SK-N-SH (cell line): ENCODE measurements at regions of chr1 and their contacts with region 1.

Region 1: DNA sequence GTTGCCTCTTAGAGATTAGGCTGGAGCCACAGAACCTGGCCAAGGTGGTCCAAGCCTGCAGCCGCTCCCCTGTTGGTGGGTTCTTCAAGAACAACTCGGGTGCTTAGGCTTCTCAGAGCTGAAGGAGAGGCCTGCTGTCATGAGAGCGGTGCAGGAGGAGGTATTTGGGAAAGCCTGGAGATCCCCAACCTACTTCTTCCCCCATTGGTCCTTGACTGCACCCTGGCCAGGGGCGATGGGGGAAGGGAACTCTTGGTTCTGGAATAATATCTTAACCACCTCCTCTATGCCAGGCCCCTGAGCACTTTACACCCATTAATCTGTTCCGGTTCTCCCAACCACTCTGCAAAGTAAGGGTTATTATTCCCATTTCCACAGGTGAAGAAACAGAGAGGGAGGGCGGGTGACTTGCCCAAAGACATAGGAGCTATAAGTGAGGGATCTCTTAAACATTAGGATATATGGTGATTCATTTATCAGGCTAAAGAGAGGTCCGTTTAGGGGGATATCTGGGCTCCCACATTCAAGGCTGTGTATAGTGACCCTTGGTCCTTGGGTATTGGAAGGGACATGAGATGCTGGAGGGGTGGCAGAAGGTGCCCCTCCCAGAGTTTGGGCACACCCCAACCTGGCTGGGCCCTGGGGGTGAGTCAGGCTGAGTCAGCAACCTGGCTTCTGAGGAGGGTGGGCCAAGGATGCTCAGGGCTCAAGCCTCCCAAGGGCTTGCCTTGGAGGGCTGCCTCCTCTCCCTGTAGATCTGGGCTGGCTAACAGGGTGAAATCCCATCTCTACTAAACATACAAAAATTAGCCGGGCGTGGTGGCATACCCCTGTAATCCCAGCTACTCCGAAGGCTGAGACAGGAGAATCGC is 5.2 kb downstream of the TRNP1 start:
- DNase-seq: no peak
- H3K4me3 ChIP-seq: no peak overlapping the region
- H3K27ac ChIP-seq: peak overlapping the region in 1 of 2 experiments; percentile 92; a peak in 2 of 4 replicates
- H3K4me1 ChIP-seq: peaks cover 8 to 30% of the 10 kb centered on the region in 2 experiments; a peak in 3 of 4 replicates
- H3K27me3 ChIP-seq: no peaks in the 10 kb centered on the region
- CTCF ChIP-seq: no peak
- EP300 ChIP-seq: no peak
- RAD21 ChIP-seq: no peak

Region 2: GRCh38 chr1:26921540-26922430 is 76.9 kb before region 1 on chr1 and contains the start of gene NUDC:
- CTCF ChIA-PET with region 1: no interaction called
- POLR2A ChIA-PET with region 1: no interaction called
- DNase-seq: peak; percentile 96
- H3K4me3 ChIP-seq: peak within 1 kb of the TSS; percentile 69 to 80
- H3K27ac ChIP-seq: peak within 1 kb of the TSS; percentile 76 to 78
- H3K4me1 ChIP-seq: peaks cover 13 to 16% of the 10 kb centered on the region in 2 experiments; a peak in 1 of 4 replicates
- H3K27me3 ChIP-seq: no peaks in the 10 kb centered on the region
- CTCF ChIP-seq: no peak
- EP300 ChIP-seq: no peak
- RAD21 ChIP-seq: no peak
- polyA plus RNA-seq, gene NUDC: 96.2 and 153 TPM in 2 replicates

Region 3: GRCh38 chr1:26961826-26962225 is 36.8 kb before region 1 on chr1:
- CTCF ChIA-PET with region 1: interaction called, 28 read pairs
- POLR2A ChIA-PET with region 1: no interaction called
- DNase-seq: no peak
- H3K4me3 ChIP-seq: no peak overlapping the region
- H3K27ac ChIP-seq: no peak overlapping the region
- H3K4me1 ChIP-seq: peaks cover 3 to 7% of the 10 kb centered on the region in 2 experiments; a peak in 1 of 4 replicates
- H3K27me3 ChIP-seq: peaks cover 41% of the 10 kb centered on the region
- CTCF ChIP-seq: no peak
- EP300 ChIP-seq: no peak
- RAD21 ChIP-seq: no peak

Region 4: DNA sequence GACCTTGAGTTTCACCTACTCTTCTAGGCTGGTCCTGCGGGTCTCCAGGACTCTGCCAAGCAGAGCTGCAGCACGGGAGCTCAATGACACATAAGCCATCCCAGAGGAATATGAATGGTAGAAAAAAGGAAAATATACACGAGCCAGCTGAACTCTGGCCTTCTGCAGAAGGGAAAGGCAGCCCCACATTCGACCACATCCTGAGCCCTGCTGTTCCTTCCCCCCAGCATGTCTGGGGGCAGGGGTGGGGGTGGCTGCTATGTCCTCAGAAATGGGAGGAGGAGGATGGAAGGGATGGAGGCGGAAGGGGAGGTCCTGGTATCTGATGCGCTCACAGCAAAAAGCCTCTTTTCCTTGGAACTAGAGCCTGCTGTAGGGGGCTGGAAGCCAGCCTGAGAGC is 26.3 kb before region 1 on chr1:
- CTCF ChIA-PET with region 1: interaction called, 28 read pairs
- POLR2A ChIA-PET with region 1: no interaction called
- DNase-seq: no peak
- H3K4me3 ChIP-seq: no peak overlapping the region
- H3K27ac ChIP-seq: no peak overlapping the region
- H3K4me1 ChIP-seq: no peaks in the 10 kb centered on the region
- H3K27me3 ChIP-seq: no peaks in the 10 kb centered on the region; the same call in 1 of the 2 replicates
- CTCF ChIP-seq: no peak
- EP300 ChIP-seq: no peak
- RAD21 ChIP-seq: no peak

Region 5: DNA sequence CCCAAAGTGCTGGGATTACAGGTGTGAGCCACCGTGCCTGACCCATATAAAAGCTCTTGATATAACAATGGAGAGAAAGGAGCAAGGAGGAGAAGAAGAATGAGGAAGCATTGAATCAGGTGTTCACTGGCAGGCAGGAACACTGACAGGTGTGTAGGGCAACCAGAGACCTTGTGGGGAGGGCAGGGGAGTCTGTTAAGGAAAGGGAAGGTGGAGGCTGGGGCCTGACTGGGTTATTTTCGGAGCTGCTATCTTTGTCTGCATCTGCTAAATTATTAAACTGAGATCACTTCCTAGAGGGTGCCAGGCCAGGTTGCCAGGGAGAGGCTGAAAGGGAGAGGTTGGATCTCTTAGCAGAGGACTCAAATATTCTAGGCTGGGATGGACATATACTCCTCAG is 12.0 kb before region 1 on chr1:
- CTCF ChIA-PET with region 1: interaction called, 21 read pairs
- POLR2A ChIA-PET with region 1: no interaction called
- DNase-seq: no peak
- H3K4me3 ChIP-seq: no peak overlapping the region
- H3K27ac ChIP-seq: no peak overlapping the region
- H3K4me1 ChIP-seq: peaks cover 0 to 5% of the 10 kb centered on the region in 2 experiments; a peak in 1 of 4 replicates
- H3K27me3 ChIP-seq: no peaks in the 10 kb centered on the region; the same call in 1 of the 2 replicates
- CTCF ChIP-seq: no peak
- EP300 ChIP-seq: no peak
- RAD21 ChIP-seq: no peak

Region 6: DNA sequence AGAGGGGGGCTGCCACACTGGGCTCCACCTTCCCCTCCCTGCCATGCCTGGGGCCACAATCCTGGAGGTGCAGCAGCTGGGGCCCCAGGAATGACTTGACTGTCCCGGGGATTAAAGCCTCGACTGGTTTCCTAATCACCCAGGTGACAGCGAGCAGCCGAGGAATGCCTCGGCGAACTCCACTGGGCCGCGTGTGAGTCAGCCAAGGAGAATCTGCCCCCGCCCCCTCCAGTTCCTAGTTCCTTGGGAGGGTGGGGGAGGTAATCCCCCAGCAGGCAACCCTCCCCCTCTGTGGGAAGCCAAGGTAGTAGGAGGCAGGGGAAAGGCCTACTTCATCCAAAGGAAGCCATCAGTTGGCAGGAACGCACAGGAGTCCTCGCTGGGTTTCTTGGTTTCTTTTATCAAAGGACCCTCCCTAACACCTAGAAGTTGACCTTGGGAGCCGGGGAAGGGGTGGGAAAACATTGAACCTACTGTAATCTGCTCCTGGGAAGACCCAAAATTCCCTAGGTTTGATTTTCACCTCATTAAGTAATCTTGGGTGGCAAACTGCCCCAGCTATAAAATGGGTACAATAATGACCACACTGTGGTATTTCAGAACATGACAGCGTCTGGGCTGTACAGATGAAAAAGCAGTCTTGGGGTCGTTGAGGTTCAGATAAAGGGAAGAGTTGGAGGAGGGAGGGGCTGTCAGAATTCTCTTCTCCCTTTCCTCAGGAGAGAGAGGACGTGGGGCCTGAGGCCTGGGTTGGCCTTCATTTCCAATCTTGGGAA is 12.5 kb after region 1 on chr1:
- CTCF ChIA-PET with region 1: interaction called, 44 read pairs
- POLR2A ChIA-PET with region 1: no interaction called
- DNase-seq: no peak
- H3K4me3 ChIP-seq: no peak overlapping the region
- H3K27ac ChIP-seq: peak overlapping the region in 1 of 2 experiments; percentile 45; a peak in 1 of 4 replicates
- H3K4me1 ChIP-seq: peaks cover 3 to 12% of the 10 kb centered on the region in 2 experiments; a peak in 3 of 4 replicates
- H3K27me3 ChIP-seq: no peaks in the 10 kb centered on the region
- CTCF ChIP-seq: no peak
- EP300 ChIP-seq: peak in 1 of 2 experiments; percentile 65; a peak in 2 of 4 replicates
- RAD21 ChIP-seq: no peak

Region 7: GRCh38 chr1:27021354-27022031 is 22.8 kb after region 1 on chr1:
- CTCF ChIA-PET with region 1: interaction called, 11 read pairs
- POLR2A ChIA-PET with region 1: no interaction called
- DNase-seq: no peak
- H3K4me3 ChIP-seq: no peak overlapping the region
- H3K27ac ChIP-seq: no peak overlapping the region
- H3K4me1 ChIP-seq: no peaks in the 10 kb centered on the region
- H3K27me3 ChIP-seq: no peaks in the 10 kb centered on the region
- CTCF ChIP-seq: no peak
- EP300 ChIP-seq: no peak
- RAD21 ChIP-seq: no peak

Region 8: GRCh38 chr1:27037515-27037914 is 38.9 kb after region 1 on chr1:
- CTCF ChIA-PET with region 1: interaction called, 15 read pairs
- POLR2A ChIA-PET with region 1: interaction called, 3 read pairs
- DNase-seq: no peak
- H3K4me3 ChIP-seq: no peak overlapping the region
- H3K27ac ChIP-seq: no peak overlapping the region
- H3K4me1 ChIP-seq: peaks cover 0 to 2% of the 10 kb centered on the region in 2 experiments; a peak in 1 of 4 replicates
- H3K27me3 ChIP-seq: no peaks in the 10 kb centered on the region
- CTCF ChIP-seq: no peak
- EP300 ChIP-seq: no peak
- RAD21 ChIP-seq: no peak

Region 9: DNA sequence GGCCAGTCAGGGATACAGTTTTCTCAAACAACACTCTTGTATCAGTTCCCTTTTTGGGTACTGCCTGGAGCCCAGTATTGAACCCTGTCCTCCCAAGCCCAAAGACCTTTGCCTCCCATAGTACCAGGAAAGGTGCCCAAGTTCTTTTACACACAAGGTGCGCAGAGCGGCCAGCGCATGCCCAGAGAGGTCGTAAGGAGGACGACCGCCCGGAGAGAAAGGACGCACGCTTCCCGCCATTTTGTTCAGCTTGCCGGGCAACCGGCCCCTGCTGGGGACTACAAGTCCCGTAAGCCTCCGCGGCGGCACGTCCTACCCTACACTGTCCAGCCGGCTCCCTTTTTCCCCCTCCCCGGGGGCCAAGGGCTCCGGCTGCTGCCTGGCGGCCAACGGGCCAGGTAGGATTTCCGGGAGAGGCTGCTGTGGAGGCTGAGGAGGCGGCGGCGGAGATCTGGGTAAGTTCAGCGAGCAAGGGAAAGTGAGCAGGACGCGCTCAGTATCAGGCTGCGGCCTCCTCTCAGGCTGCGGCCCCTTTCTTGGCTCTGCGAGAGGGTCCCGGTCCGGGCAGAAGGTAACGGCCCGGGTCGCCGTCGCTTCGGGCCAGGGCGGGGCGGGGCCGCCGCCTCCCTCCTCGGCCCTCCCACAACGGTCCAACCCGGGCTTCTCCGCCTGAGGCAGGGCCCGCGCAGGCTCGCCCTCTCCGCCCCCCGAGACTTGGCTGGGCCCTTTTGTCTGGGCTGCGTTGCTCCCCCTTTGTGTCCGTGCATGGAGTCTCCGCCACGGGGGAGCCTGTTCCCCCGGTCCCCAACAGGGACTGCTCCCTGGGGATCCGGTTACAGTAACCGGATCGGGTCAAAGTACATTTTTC is 1370.9 kb after region 1 on chr1 and contains the start of gene PHACTR4:
- CTCF ChIA-PET with region 1: no interaction called
- POLR2A ChIA-PET with region 1: no interaction called
- DNase-seq: peak; percentile 97
- H3K4me3 ChIP-seq: peak within 1 kb of the TSS; percentile 64 to 86
- H3K27ac ChIP-seq: peak within 1 kb of the TSS; percentile 92
- H3K4me1 ChIP-seq: peaks cover 6 to 14% of the 10 kb centered on the region in 2 experiments; a peak in 2 of 4 replicates
- H3K27me3 ChIP-seq: no peaks in the 10 kb centered on the region
- CTCF ChIP-seq: no peak
- EP300 ChIP-seq: no peak
- RAD21 ChIP-seq: no peak
- polyA plus RNA-seq, gene PHACTR4: 9.8 and 10.5 TPM in 2 replicates